ENCODE measurements at regions of chr16 and their contacts with region 1.

Region 1: DNA sequence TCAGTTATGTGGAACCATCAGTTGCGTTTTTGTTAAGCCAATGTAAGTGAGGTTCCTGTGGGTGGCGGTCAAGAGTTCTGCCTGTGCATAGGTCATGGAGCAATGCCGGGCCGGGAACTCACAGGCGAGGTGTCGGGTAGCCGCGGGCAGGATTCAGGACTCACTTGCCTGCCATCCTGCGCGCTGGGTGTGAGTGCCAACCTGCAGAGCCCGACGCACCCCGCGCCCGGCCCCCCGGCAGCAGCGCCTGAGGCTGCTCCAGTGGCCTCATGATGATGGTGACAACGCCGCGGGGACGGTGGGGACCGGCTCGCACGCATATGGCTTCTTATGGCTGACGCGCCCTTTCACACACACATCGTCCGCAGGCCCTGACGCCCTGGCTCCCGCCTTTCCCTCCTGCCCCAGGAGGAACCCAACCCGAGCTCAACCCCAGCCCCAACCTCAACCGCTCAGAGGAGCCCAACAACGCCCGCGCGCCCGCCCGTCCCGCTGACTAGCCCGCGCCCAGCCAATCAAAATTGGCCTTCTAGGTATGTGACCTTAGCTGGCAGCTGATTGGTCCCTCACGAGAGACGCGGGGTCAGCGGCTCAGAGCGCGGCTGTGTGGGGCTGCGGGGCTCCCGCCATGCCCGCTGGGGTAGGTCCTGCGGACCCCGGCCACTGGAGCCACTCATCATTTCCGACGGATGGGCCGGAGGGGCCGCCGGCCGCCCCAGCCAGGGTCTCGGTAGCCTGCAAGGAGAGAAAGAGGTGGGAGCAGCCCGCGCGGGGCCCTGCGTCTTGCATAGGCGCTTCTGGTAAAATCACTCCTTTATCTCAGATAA is at the start of gene C16orf95:
- DNase-seq: peak; percentile 94 to 99 (median 98)

Region 2: GRCh38 chr16:87636072-87636684 is 319.0 kb after region 1 on chr16:
- intact Hi-C with region 1: loop called (anchors 10 kb)
- DNase-seq: peak; percentile 61 to 94 (median 86)

Measured in head of caudate nucleus (tissue), 42 donors.